ENCODE measurements at regions of chr3 and their contacts with region 1.

Region 1: GRCh38 chr3:122101646-122102045 is 46.5 kb downstream of the CD86 start:
- DNase-seq: peak; percentile 28
- CTCF ChIP-seq: peak; percentile 71

Region 2: GRCh38 chr3:121651684-121652083 is 450.0 kb before region 1 on chr3:
- in situ Hi-C with region 1: no loop called
- DNase-seq: no peak
- CTCF ChIP-seq: no peak

Region 3: GRCh38 chr3:122258757-122259371 is 157.2 kb after region 1 on chr3:
- in situ Hi-C with region 1: loop called (anchors 10 kb)
- DNase-seq: peak; percentile 66
- CTCF ChIP-seq: peak; percentile 82